PC-3 (cell line): ENCODE measurements at regions of chr2 and their contacts with region 1.

Region 1: GRCh38 chr2:165778653-165779451 is 15.2 kb downstream of the GALNT3 start:
- DNase-seq: peak; percentile 65
- ATAC-seq: peak; percentile 6
- H3K4me3 ChIP-seq: peak overlapping the region; percentile 2; the same call in 1 of the 2 replicates
- H3K27ac ChIP-seq: peak overlapping the region; percentile 78
- H3K4me1 ChIP-seq: peaks cover 37% of the 10 kb centered on the region
- H3K27me3 ChIP-seq: no peaks in the 10 kb centered on the region
- CTCF ChIP-seq: peak; percentile 63

Region 2: DNA sequence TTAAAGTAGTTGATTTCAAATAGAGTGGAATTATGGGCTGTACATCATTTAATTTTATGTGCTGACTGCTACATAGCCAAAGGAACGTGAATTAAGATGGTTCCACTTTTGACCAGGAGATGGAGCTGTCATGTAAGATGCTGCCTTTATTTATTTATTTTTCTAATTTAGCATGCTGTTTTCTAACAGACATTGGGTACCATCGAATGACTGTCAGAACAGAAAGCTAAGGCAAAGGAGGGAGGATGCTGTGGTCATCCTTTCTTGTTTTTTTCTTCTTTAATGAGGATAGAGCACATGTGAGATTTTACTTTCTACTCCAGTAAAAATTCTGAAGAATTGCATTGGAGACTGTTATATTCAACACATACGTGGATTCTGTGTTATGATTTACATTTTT is 539.6 kb before region 1 on chr2 and contains the start of gene SCN2A:
- CTCF ChIA-PET with region 1: no interaction called
- POLR2A ChIA-PET with region 1: no interaction called
- intact Hi-C with region 1: loop called (anchors 2 kb)
- DNase-seq: peak; percentile 67
- ATAC-seq: peak; percentile 37
- H3K4me3 ChIP-seq: no peak within 1 kb of the TSS
- H3K27ac ChIP-seq: no peak within 1 kb of the TSS
- H3K4me1 ChIP-seq: no peaks in the 10 kb centered on the region
- H3K27me3 ChIP-seq: no peaks in the 10 kb centered on the region
- CTCF ChIP-seq: peak; percentile 74
- total RNA-seq, gene SCN2A: 0.07 and 0.46 TPM in 2 replicates

Region 3: DNA sequence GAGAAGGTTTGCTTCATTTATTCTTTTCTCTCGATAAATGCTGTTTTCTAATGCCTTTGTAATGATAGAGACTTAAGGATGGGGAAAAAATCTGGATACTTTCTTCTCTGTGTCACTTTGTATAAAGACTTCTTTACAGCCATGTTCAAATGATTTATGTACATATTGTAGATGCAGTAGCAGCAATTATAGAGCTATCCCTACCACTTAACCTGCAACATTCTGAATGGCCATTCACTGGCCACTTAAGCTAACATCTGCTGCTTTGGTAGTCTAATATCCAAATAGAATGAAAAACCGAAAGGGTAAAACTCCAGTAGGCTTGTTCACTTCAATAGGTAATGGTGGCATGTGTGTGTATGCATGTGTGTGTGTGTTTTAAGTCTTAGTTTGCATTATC is 211.6 kb before region 1 on chr2:
- CTCF ChIA-PET with region 1: no interaction called
- POLR2A ChIA-PET with region 1: no interaction called
- intact Hi-C with region 1: loop called (anchors 5 kb)
- DNase-seq: no peak
- ATAC-seq: no peak
- H3K4me3 ChIP-seq: no peak overlapping the region
- H3K27ac ChIP-seq: no peak overlapping the region
- H3K4me1 ChIP-seq: no peaks in the 10 kb centered on the region
- H3K27me3 ChIP-seq: no peaks in the 10 kb centered on the region
- CTCF ChIP-seq: no peak

Region 4: GRCh38 chr2:165725421-165725820 is 53.4 kb before region 1 on chr2:
- CTCF ChIA-PET with region 1: no interaction called
- POLR2A ChIA-PET with region 1: no interaction called
- intact Hi-C with region 1: loop called (anchors 1 kb)
- DNase-seq: peak; percentile 93
- ATAC-seq: peak; percentile 98
- H3K4me3 ChIP-seq: no peak overlapping the region
- H3K27ac ChIP-seq: peak overlapping the region; percentile 16
- H3K4me1 ChIP-seq: peaks cover 12% of the 10 kb centered on the region
- H3K27me3 ChIP-seq: no peaks in the 10 kb centered on the region
- CTCF ChIP-seq: no peak

Region 5: DNA sequence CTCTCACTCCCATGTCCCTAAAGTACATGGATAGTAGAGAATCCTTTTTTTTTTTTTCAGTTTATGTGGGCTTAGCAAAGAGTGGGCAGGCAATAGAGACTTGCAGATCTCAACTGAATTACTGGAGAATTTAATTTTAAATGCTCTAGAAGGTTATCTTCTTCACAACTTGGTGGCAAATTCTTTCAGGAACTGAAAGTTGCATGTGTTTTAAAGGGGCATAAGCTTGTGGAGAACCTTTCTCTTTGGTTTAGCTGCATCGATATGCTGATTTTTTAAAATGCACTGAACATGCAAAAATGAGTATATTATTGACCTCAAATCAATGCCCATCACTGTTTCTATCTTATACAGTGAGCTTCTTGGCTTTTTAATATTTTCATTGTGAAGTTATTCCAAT is 40.1 kb after region 1 on chr2:
- CTCF ChIA-PET with region 1: no interaction called
- POLR2A ChIA-PET with region 1: interaction called, 20 read pairs
- intact Hi-C with region 1: no loop called
- DNase-seq: no peak
- ATAC-seq: no peak
- H3K4me3 ChIP-seq: no peak overlapping the region
- H3K27ac ChIP-seq: no peak overlapping the region
- H3K4me1 ChIP-seq: no peaks in the 10 kb centered on the region
- H3K27me3 ChIP-seq: no peaks in the 10 kb centered on the region
- CTCF ChIP-seq: no peak

Region 6: GRCh38 chr2:166202778-166203177 is 423.9 kb after region 1 on chr2:
- CTCF ChIA-PET with region 1: no interaction called
- POLR2A ChIA-PET with region 1: no interaction called
- intact Hi-C with region 1: no loop called
- DNase-seq: no peak
- ATAC-seq: no peak
- H3K4me3 ChIP-seq: no peak overlapping the region
- H3K27ac ChIP-seq: no peak overlapping the region
- H3K4me1 ChIP-seq: no peaks in the 10 kb centered on the region
- H3K27me3 ChIP-seq: no peaks in the 10 kb centered on the region
- CTCF ChIP-seq: no peak

Region 7: DNA sequence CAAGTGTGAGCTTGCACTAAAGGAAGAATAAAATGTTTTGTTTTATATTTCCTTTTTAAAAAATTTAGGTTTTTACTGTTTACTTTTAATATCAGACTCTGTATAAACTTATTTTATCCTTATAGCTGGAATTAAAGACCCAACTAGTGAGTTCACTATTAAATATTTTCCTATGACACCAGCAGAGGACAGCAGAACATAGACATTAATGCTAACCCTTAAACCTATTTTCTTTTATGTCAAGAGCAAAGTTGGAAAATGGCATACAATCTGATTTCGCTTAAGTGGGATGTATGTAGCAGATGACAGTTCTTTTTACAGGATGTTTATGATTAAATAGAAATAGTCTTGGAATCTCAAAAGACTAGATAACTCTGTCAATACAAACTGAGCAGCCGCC is 921.2 kb after region 1 on chr2:
- CTCF ChIA-PET with region 1: no interaction called
- POLR2A ChIA-PET with region 1: no interaction called
- intact Hi-C with region 1: loop called (anchors 5 kb)
- DNase-seq: peak; percentile 47
- ATAC-seq: peak; percentile 67
- H3K4me3 ChIP-seq: no peak overlapping the region
- H3K27ac ChIP-seq: no peak overlapping the region
- H3K4me1 ChIP-seq: no peaks in the 10 kb centered on the region
- H3K27me3 ChIP-seq: 0 out of 2 replicates have a peak, but pooled peaks cover 3% of the 10 kb centered on the region
- CTCF ChIP-seq: peak; percentile 69